ENCODE measurements at regions of chr3 and their contacts with region 1.

Region 1: DNA sequence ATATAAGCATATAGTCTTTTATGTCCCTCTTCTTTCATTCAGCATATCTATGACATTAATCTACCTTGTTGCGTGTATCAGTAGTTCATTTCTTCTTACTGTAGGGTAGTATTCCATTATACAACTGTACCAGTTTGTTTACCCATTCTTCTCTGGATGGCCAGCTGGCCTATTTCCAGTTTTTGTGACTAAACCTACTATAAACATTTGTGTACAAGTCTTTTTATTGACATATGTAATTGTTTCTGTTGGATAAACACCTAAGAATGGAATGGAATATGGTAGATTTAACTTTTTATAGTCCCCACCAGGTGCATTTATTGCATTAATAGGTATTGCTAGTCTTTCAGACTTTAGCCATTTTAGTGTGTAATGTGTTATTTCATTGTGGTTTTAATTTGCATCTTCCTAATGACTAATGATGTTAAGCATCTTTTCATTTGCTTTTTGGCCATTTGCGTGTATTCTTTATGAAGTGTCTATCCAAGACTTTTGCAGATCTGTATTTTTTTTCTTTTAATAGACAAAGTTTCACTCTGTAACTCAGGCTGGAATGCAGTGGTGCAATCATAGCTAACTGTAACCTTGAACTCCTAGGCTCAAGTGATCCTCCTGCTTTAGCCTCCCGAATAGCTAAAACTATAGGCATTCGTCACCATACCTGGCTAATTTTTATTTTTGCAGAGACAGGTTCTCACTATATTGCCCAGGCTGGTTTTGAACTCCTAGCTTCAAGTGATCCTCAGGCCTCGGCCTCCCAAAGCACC is 41.9 kb upstream of the XRN1 start:
- DNase-seq: no peak
- H3K4me3 Mint-ChIP-seq: no peak overlapping the region
- H3K27ac Mint-ChIP-seq: no peak overlapping the region
- H3K4me1 Mint-ChIP-seq: peaks cover 9% of the 10 kb centered on the region
- H3K27me3 Mint-ChIP-seq: no peaks in the 10 kb centered on the region

Region 2: GRCh38 chr3:142523921-142524566 is 34.3 kb after region 1 on chr3:
- CTCF ChIA-PET with region 1: no interaction called
- intact Hi-C with region 1: loop called (anchors 5 kb)
- DNase-seq: no peak
- H3K4me3 Mint-ChIP-seq: no peak overlapping the region
- H3K27ac Mint-ChIP-seq: no peak overlapping the region
- H3K4me1 Mint-ChIP-seq: peaks cover 8% of the 10 kb centered on the region
- H3K27me3 Mint-ChIP-seq: no peaks in the 10 kb centered on the region

Region 3: GRCh38 chr3:143001369-143002082 is 511.8 kb after region 1 on chr3 and contains the start of gene U2SURP:
- CTCF ChIA-PET with region 1: no interaction called
- intact Hi-C with region 1: no loop called
- DNase-seq: peak; percentile 95
- H3K4me3 Mint-ChIP-seq: peak within 1 kb of the TSS; percentile 96
- H3K27ac Mint-ChIP-seq: peak within 1 kb of the TSS; percentile 96
- H3K4me1 Mint-ChIP-seq: peaks cover 31% of the 10 kb centered on the region
- H3K27me3 Mint-ChIP-seq: no peaks in the 10 kb centered on the region
- total RNA-seq, gene U2SURP: 173 to 180 TPM